Heart left ventricle (tissue), 16 donors: ENCODE measurements at regions of chr5 and their contacts with region 1.

Region 1: DNA sequence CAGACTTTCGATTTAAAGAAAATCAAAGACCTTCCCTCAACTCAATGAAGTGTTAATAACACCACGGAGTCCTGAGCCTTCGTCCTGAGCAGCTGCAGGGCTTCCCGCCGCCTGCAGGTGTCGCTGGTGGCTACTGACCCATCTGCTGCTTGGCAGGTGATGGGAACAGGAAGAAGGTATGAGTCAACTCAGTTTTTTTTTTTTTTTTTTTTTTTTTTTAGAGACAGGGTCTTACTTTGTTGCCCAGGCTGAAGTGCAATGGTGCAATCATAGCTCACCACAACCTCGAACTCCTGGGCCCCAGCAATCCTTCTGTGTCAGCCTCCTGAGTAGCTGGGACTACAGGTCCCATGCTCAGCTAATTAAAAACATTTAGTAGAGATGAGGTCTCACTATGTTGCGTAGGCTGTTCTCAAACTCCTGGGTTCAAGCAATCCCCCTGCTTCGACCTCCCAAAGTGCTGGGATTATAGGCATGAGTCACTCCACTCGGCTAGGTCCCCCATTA is 185.7 kb upstream of the IL12B start:
- DNase-seq: peak in 3 of 5 donors; percentile 27 to 55 (median 39)
- ATAC-seq: peak; percentile 46 to 87 (median 70)
- H3K4me3 ChIP-seq: no peak overlapping the region
- H3K27ac ChIP-seq: no peak overlapping the region
- H3K4me1 ChIP-seq: peaks cover 0 to 8% (median 0%) of the 10 kb centered on the region in 12 donors
- H3K27me3 ChIP-seq: no peaks in the 10 kb centered on the region
- CTCF ChIP-seq: peak; percentile 49 to 72 (median 65)
- POLR2A ChIP-seq: no peak

Region 2: DNA sequence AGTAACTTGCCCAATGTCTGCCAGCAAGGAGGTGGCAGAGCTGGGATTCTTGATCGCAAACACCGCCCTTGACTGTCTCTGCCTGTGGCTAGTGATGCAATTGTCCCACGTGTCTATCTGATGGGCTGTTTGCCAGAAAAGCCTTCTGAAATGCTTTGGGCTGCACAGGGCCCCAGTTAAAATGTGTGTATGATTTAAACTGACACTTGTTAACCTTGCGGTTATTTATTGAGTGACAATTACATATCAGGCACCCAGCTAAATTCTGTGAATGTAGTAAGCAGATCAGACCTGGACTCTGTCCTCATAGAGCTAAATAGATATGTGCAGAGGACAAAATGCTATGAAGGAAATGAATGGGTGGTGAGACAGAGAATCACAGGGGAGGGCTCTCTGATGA is 174.0 kb before region 1 on chr5:
- intact Hi-C with region 1: loop called in 1 of 10 experiments (anchors 10 kb)
- DNase-seq: peak in 4 of 5 donors; percentile 62 to 67 (median 64)
- ATAC-seq: peak; percentile 69 to 90 (median 86)
- H3K4me3 ChIP-seq: no peak overlapping the region
- H3K27ac ChIP-seq: peak overlapping the region in 4 of 12 donors; percentile 26 to 56 (median 32)
- H3K4me1 ChIP-seq: peaks cover 0 to 37% (median 5%) of the 10 kb centered on the region in 12 donors
- H3K27me3 ChIP-seq: no peaks in the 10 kb centered on the region
- CTCF ChIP-seq: no peak
- POLR2A ChIP-seq: no peak

Region 3: GRCh38 chr5:159764283-159765134 is 248.5 kb after region 1 on chr5:
- intact Hi-C with region 1: loop called in 2 of 10 experiments (anchors 10 kb)
- DNase-seq: peak in 4 of 5 donors; percentile 33 to 50 (median 35)
- ATAC-seq: peak in 3 of 4 donors; percentile 75 to 81 (median 79)
- H3K4me3 ChIP-seq: no peak overlapping the region
- H3K27ac ChIP-seq: peak overlapping the region in 7 of 12 donors; percentile 5 to 49 (median 26)
- H3K4me1 ChIP-seq: peaks cover 0 to 24% (median 6%) of the 10 kb centered on the region in 12 donors
- H3K27me3 ChIP-seq: peaks cover 0 to 9% (median 0%) of the 10 kb centered on the region in 9 donors
- CTCF ChIP-seq: no peak
- POLR2A ChIP-seq: no peak

Region 4: DNA sequence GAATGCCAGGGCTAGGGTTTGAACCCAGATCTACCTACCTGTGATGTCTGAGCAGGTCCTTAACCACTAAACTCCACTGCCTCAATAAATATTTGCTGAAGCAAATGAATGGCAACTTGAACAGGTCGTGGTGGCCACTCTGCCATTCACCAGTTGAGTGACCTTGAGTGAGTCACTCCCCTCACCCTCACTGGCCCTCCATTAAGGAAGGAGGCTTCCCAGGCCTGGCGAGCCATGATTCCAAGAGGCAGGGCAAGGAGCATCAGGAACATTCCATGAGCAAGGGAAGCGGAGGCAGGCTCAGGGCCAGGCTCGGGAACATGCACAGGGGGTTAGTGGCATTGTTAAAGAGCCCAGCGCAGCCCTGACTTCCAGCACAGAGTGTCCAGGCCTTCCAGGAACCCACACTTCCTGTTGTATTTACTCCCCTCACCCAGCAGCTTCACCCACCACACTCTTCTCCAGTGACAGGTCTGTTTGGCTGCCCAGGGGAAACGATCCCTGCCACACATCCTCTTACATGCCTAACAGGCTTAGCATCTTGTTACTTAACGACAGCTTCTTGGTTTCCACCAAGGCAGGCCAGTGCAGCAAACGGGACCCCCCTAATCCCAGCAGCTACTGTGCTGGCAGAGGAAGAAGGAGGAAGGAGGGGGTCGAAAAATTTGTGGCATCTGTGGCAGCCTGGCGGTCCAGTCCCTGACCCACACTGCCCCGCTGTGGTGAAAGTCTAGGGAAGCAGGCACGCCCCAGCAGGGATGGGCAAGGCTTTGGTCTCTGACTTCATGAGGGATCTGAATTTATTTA is 449.3 kb after region 1 on chr5:
- intact Hi-C with region 1: loop called in 5 of 10 experiments (anchors 5 to 10 kb)
- DNase-seq: peak in 4 of 5 donors; percentile 35 to 65 (median 54)
- ATAC-seq: peak; percentile 69 to 85 (median 77)
- H3K4me3 ChIP-seq: no peak overlapping the region
- H3K27ac ChIP-seq: no peak overlapping the region
- H3K4me1 ChIP-seq: peaks cover 0 to 4% (median 0%) of the 10 kb centered on the region in 12 donors
- H3K27me3 ChIP-seq: peaks cover 0 to 24% (median 2%) of the 10 kb centered on the region in 9 donors
- CTCF ChIP-seq: peak; percentile 38 to 79 (median 63)
- POLR2A ChIP-seq: no peak

Region 5: DNA sequence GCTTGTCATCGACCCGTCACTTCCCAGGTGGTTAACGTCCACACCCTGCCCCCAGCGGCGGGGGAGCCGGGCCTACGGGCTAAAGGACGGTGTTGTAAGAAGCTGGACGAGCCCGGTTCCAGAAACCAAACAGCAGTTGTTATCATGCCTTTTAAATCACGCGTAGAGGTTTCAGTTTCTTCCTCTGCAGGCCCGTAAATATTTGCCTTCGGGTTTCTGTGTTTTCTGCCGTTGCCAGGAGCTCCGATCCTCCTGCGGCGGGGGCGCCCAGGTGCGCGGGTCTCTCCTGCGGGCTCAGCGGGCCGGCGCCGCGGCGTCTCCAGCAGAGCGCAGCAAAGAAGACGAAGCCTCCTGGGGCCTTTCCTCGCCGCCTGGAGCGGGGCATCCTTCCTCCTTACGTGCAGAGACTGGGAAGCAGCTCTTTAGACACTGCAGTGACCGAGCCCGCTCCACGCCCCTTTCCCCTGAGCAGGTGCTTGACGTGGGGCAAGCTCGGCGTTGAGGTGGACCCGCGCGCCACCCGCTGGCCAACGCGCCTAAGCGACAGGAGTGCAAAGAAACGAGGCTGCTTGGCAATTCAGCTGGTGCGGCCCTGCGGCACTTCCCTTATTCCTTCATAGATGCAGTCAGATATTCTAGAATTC is 471.2 kb after region 1 on chr5:
- intact Hi-C with region 1: loop called in 2 of 10 experiments (anchors 10 kb)
- DNase-seq: peak; percentile 62 to 84 (median 75)
- ATAC-seq: peak; percentile 66 to 95 (median 92)
- H3K4me3 ChIP-seq: peak overlapping the region; percentile 18 to 60 (median 46)
- H3K27ac ChIP-seq: no peak overlapping the region
- H3K4me1 ChIP-seq: peaks cover 0 to 9% (median 4%) of the 10 kb centered on the region in 12 donors
- H3K27me3 ChIP-seq: peaks cover 0 to 27% (median 2%) of the 10 kb centered on the region in 9 donors
- CTCF ChIP-seq: peak; percentile 38 to 81 (median 64)
- POLR2A ChIP-seq: no peak